ENCODE measurements at regions of chrX and their contacts with region 1.

Region 1: GRCh38 chrX:153554519-153555167 is 37.2 kb downstream of the ATP2B3 start:
- DNase-seq: peak; percentile 71
- CTCF ChIP-seq: peak; percentile 70

Region 2: DNA sequence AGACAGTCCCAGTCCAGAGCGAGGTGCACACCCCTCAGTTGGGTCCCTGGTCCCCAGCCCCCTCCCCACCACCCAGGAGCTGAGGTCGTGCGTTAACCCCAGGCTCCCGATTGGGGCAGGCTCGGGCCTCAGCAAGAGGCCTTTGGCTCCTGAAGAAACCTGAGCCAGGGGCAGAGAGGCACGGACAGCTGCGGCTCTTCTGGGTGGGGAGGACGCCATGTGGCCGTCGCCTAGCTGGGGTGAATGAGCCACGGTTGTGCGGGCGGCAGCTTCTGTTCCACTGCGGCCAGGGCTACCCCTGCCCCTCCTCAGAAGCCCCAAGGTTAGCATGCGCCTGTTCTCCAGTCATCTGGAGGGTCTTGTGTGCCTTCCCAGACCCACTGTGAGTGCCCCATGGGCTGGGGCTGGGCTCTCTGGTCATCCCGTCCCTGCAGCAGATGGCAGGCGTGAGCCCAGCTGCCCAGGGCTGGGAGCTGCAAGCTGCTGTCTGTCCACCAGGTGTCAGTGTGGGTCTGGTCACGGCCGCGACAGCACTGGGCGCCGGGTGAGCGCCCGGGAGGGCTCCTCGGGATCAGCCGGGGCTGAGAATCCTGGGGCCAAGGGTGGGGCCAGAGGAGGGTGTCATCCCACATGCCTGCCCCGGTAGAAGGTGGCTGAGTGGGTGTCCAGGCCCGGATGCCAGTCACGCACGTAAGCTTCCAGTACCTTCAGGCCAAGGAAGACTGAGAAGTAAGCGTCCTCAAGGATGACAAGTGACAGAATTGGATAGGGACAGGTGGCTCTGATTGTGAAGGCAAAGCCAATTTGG is 15.3 kb before region 1 on chrX:
- CTCF ChIA-PET with region 1: interaction called, 26 read pairs
- POLR2A ChIA-PET with region 1: no interaction called
- DNase-seq: peak; percentile 77
- CTCF ChIP-seq: peak; percentile 79

Region 3: DNA sequence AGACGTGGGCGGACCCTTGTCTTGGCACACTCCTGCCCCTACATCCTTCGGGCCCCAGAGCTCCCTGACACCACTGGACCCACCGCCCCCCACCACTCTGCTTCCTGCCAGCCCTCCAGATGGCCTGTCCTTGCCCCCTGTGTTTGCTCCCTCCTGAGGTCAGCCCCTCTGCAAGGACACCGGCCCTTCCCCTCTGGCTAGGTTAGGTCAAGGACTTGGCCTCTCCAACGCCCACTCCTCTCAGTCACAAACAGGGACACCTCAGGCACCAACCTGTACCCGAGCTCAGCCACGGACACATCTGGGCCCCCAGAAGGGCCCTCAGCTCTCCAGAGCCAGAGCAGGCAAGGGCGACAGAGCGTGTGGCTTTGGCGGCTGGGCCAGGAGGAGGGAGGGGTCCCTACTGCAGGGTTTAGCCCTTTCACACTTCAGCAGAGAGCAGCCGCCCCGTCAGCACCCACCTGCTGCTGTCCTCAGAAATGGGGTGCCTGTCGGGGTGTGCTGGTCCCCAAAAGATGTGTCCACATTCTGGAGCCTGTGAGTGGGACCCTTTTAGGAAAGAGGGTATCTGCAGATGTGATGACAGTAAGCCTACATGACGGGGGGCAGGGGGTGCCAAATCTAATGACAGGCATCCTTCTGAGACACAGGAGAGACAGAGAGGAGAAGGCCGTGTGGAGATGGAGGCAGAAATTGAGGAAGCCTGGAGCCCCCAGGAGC is 68.8 kb after region 1 on chrX:
- CTCF ChIA-PET with region 1: no interaction called
- POLR2A ChIA-PET with region 1: no interaction called
- DNase-seq: no peak
- CTCF ChIP-seq: no peak

Region 4: GRCh38 chrX:153649178-153649914 is 94.7 kb after region 1 on chrX:
- CTCF ChIA-PET with region 1: interaction called, 35 read pairs
- POLR2A ChIA-PET with region 1: no interaction called
- DNase-seq: peak; percentile 80
- CTCF ChIP-seq: peak; percentile 65

Region 5: GRCh38 chrX:153662266-153662665 is 107.6 kb after region 1 on chrX:
- CTCF ChIA-PET with region 1: interaction called, 28 read pairs
- POLR2A ChIA-PET with region 1: no interaction called
- DNase-seq: peak; percentile 17
- CTCF ChIP-seq: peak; percentile 43

Region 6: GRCh38 chrX:153875391-153876111 is 320.9 kb after region 1 on chrX:
- CTCF ChIA-PET with region 1: no interaction called
- POLR2A ChIA-PET with region 1: no interaction called
- DNase-seq: peak; percentile 77
- CTCF ChIP-seq: no peak